ENCODE measurements at regions of chr21 and their contacts with region 1.

Region 1: GRCh38 chr21:46144464-46145070 is 10.8 kb downstream of the FTCD start:
- DNase-seq: no peak
- H3K4me3 ChIP-seq: no peak overlapping the region
- H3K27ac ChIP-seq: no peak overlapping the region
- H3K4me1 ChIP-seq: peaks cover 0 to 2% (median 0%) of the 10 kb centered on the region in 4 experiments; a peak in 3 of 7 replicates
- H3K27me3 ChIP-seq: peaks cover 0 to 19% (median 6%) of the 10 kb centered on the region in 4 experiments; a peak in 4 of 7 replicates
- CTCF ChIP-seq: no peak
- EP300 ChIP-seq: no peak
- POLR2A ChIP-seq: no peak
- RAD21 ChIP-seq: no peak

Region 2: DNA sequence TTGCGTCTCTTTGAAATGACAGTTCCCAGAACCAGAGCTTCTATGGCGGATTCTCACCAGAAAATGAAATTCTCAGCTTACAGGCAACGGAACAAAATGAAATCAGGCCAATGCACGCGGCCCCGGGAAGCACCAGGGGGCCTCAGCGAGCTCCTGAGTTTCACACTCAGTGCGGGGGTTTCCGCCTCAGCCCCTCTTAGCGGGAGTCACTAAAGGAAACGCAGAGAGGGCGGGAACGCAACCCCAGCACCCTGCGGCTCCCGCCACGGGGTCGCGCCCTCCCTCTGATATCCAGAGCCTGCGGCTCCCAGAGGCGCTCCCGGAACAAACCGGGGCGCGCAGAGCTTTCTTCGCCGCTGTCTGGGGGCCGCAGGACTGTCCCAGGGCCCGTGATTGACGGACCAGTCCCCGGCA is 170.9 kb before region 1 on chr21:
- CTCF ChIA-PET with region 1: interaction called, 47 read pairs
- POLR2A ChIA-PET with region 1: interaction called, 5 read pairs
- DNase-seq: no peak
- H3K4me3 ChIP-seq: peak overlapping the region; percentile 42 to 71 (median 60)
- H3K27ac ChIP-seq: no peak overlapping the region
- H3K4me1 ChIP-seq: peaks cover 0 to 29% (median 17%) of the 10 kb centered on the region in 4 experiments; a peak in 6 of 7 replicates
- H3K27me3 ChIP-seq: peaks cover 0 to 23% (median 11%) of the 10 kb centered on the region in 4 experiments; a peak in 4 of 7 replicates
- CTCF ChIP-seq: peak in 2 of 3 experiments; percentile 20 to 45; a peak in 2 of 4 replicates
- EP300 ChIP-seq: no peak
- POLR2A ChIP-seq: no peak
- RAD21 ChIP-seq: peak; percentile 21 to 37; a peak in 3 of 4 replicates

Region 3: DNA sequence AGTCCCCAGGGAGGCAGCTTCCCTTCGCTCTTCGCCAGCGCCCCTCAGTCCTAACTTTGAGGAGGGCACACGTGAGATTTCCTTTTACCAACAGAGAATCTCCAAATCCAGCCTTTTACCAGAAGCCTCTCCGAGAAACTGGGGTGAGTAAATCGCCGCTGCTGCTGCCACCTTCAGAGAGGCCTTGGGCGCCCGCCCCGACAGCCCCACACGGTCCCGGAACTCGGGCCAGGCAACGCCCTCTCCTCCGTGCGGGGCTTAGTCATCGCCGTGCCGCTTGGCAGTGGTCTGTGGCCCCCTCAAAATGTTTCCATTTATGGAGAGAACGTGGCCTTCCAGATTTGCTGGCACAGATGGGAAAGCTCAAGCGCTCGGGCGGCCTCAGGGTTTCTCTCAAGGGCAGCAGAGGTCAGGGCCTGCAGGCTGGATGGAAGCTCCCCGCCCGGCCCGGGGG is 88.1 kb before region 1 on chr21:
- CTCF ChIA-PET with region 1: no interaction called
- POLR2A ChIA-PET with region 1: no interaction called
- DNase-seq: peak in 1 of 2 experiments; percentile 52
- H3K4me3 ChIP-seq: no peak overlapping the region
- H3K27ac ChIP-seq: no peak overlapping the region
- H3K4me1 ChIP-seq: peaks cover 0 to 3% (median 2%) of the 10 kb centered on the region in 4 experiments; a peak in 4 of 7 replicates
- H3K27me3 ChIP-seq: no peaks in the 10 kb centered on the region
- CTCF ChIP-seq: no peak
- EP300 ChIP-seq: no peak
- POLR2A ChIP-seq: no peak
- RAD21 ChIP-seq: no peak

Region 4: DNA sequence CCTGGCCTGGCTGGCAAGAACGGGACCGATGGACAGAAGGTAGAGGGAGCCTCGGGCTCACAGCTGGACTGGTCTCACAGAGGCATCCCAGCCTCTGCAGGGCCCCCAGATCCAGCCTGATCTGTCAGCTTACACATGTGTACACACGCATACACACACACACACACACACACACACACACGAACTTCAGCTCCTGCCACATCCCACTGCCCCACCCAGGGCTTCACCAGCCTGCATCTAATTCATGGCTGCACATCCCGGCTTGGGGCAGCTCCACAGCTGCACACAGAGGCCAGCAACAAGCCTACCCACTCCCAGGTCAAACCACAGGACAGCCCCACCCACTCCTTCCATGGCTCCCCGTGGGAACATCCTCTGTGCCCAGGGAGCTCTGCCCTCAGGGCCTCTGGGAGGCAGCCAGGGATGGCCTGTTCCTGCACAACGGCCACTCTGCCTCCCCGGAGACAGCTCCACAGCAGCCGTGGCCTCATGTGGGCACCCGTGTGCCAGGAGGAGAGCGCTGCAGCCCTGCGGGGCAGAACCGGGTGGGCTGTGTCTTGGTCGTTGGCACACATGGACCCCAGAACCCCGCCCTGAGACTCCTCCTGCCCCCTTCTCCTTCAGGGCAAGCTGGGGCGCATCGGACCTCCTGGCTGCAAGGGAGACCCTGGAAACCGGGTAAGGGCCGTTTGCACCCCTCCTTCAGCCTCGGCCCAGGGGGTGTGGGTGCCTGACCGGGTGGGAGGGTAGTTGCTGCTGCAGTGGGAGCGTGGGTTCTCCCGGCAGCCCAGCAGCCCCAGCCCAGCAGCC is 27.6 kb before region 1 on chr21:
- CTCF ChIA-PET with region 1: interaction called, 14 read pairs
- POLR2A ChIA-PET with region 1: no interaction called
- DNase-seq: peak in 1 of 2 experiments; percentile 41
- H3K4me3 ChIP-seq: no peak overlapping the region
- H3K27ac ChIP-seq: no peak overlapping the region
- H3K4me1 ChIP-seq: no peaks in the 10 kb centered on the region
- H3K27me3 ChIP-seq: no peaks in the 10 kb centered on the region
- CTCF ChIP-seq: no peak
- EP300 ChIP-seq: no peak
- POLR2A ChIP-seq: no peak
- RAD21 ChIP-seq: no peak

Region 5: GRCh38 chr21:46128106-46128860 is 16.3 kb before region 1 on chr21:
- CTCF ChIA-PET with region 1: interaction called, 19 read pairs
- POLR2A ChIA-PET with region 1: interaction called, 4 read pairs
- DNase-seq: no peak
- H3K4me3 ChIP-seq: no peak overlapping the region
- H3K27ac ChIP-seq: no peak overlapping the region; the same call in 1 of the 2 replicates
- H3K4me1 ChIP-seq: peaks cover 0 to 7% (median 0%) of the 10 kb centered on the region in 4 experiments; a peak in 2 of 7 replicates
- H3K27me3 ChIP-seq: no peaks in the 10 kb centered on the region
- CTCF ChIP-seq: no peak
- EP300 ChIP-seq: no peak
- POLR2A ChIP-seq: no peak
- RAD21 ChIP-seq: no peak

Region 6: GRCh38 chr21:46182548-46183343 is 38.2 kb after region 1 on chr21:
- CTCF ChIA-PET with region 1: interaction called, 11 read pairs
- POLR2A ChIA-PET with region 1: interaction called, 6 read pairs
- DNase-seq: no peak
- H3K4me3 ChIP-seq: no peak overlapping the region
- H3K27ac ChIP-seq: no peak overlapping the region
- H3K4me1 ChIP-seq: peaks cover 1 to 20% (median 9%) of the 10 kb centered on the region in 4 experiments; a peak in 6 of 7 replicates
- H3K27me3 ChIP-seq: no peaks in the 10 kb centered on the region
- CTCF ChIP-seq: peak in 1 of 3 experiments; percentile 36; a peak in 2 of 4 replicates
- EP300 ChIP-seq: no peak
- POLR2A ChIP-seq: no peak
- RAD21 ChIP-seq: peak in 1 of 2 experiments; percentile 6; a peak in 1 of 4 replicates

Region 7: DNA sequence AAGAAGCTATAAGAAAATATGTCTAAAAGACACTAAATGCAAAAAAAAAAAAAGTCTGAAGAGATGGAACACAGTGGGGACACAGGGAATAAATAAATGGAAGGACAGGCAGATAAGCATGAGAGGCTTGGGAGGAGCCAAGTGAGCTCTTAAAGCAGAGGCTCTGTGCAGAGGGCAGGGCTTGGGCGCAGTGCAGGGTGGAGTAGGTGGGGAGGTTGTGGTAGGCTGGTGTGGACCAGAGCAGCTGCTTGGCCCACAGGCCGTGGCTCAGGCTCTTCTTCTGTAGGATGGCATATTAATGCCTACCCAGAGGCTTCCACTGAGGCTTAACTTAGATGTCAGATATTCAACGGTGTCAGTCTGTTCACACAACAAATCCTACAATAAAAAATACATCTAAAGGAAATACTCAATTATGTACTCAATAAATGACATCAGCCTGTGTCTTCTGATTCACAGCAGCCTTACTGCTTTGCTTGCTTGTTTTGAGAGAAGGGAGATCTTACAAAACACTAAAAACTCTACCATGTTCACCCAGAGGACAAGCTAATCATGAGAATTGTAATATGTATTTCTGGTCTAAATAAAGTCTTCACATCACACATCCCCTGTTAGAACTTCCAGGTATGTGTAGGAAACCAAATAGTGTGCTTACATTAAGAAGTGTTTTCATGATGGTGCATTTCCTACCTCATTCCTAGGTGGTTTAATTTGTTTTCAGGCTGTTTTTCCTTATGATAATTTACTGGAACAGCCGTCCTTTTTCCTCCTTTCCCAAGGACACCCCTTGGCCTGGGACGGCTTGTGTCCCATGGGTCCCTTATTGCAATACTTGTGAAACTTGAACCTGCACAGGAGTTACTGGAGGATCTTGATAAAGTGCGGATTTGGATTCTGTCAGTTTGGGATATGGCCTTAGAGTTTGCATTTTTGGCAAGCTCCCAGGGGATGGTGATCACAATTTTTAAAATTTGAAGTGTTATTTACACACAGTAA is 339.0 kb after region 1 on chr21:
- CTCF ChIA-PET with region 1: no interaction called
- POLR2A ChIA-PET with region 1: no interaction called
- DNase-seq: no peak
- H3K4me3 ChIP-seq: no peak overlapping the region
- H3K27ac ChIP-seq: no peak overlapping the region
- H3K4me1 ChIP-seq: no peaks in the 10 kb centered on the region
- H3K27me3 ChIP-seq: no peaks in the 10 kb centered on the region
- CTCF ChIP-seq: no peak
- EP300 ChIP-seq: no peak
- POLR2A ChIP-seq: no peak
- RAD21 ChIP-seq: no peak